ENCODE measurements at regions of chr16 and their contacts with region 1.

Region 1: DNA sequence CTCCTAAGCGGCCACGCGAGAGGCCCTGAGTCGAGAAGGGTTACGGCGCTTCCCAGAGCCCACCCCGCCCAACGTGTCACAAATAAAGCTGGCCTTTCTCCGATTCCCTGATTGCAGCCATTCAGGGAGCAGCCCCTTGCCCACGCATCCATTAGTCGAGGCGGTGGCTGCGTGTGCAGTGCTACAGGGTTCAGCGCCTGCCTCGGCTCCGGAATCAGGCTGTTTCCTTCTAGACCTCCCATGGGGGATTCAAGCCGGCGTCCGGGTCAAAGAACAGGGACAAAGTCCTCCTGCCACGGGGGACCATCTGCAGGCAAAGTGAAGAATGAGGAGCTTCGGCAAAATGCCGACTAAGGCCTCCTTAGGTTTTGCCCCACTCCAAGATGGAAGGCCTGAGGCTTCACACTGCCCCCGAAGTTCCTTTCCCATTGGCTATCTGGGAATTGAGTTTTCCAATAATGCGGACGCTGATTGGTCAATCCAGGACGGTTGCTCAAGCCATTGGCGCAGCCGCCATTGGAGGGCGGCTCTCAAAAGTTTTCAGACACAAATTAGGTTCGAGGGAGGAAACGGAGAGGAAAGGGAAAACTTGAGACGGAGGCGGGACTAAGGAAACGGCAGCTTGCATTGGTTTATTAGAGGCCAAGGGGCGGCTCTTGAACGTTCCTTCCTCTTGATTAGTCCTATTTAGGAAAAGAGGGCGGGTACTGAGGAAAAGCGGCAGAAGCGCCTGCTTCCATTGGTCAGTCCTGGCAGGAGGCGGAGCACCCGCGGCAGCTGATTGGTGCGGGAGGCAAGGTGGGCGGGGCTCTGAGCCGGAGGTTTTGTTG is 430 bp upstream of the KATNB1 start:
- DNase-seq: peak; percentile 94
- ATAC-seq: peak; percentile 93
- H3K4me3 Mint-ChIP-seq: peak overlapping the region; percentile 95
- H3K27ac Mint-ChIP-seq: peak overlapping the region; percentile 98
- H3K4me1 Mint-ChIP-seq: peaks cover 30% of the 10 kb centered on the region
- H3K27me3 Mint-ChIP-seq: no peaks in the 10 kb centered on the region
- CTCF ChIP-seq: no peak

Region 2: DNA sequence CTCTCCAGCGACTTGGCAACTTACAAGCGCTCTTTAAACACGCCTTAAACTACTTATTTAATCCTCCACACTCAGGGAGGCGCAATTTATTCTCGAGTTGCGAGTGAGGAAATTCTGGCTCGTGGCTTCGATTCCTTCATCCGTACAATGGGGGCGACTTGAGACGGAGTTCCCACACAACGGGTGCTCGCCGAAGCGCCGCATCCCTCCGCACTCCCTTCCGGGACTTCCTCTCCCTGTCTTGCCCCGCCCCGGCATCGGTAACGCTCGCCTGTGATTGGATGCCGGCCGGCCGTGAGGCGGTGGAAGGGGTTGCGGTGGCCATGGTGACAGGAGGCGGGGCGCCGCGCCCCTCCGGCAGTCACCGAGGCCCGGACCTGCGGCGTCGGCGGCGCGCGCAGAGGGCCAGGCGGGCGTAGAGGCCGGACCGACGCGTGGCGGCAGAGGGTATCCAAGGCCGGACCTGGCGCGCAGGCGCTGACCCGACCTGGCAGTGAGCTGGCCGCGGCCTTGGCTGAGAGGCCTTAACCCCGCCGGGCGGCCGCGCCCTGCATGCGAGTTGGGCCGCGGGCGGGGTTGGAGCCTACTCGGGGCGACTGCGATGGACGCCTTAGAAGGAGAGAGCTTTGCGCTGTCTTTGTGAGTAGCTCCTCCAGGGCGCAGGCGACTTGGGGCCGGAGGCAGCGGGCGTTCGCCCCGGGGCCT is 490.2 kb before region 1 on chr16 and contains the start of gene ARL2BP:
- CTCF ChIA-PET with region 1: no interaction called
- POLR2A ChIA-PET with region 1: no interaction called
- intact Hi-C with region 1: loop called (anchors 1 kb)
- DNase-seq: peak; percentile 95
- ATAC-seq: peak; percentile 95
- H3K4me3 Mint-ChIP-seq: peak within 1 kb of the TSS; percentile 94
- H3K27ac Mint-ChIP-seq: peak within 1 kb of the TSS; percentile 91
- H3K4me1 Mint-ChIP-seq: peaks cover 40% of the 10 kb centered on the region
- H3K27me3 Mint-ChIP-seq: no peaks in the 10 kb centered on the region
- CTCF ChIP-seq: no peak
- total RNA-seq, gene ARL2BP: 27.1 and 29.4 TPM in 2 replicates

Region 3: GRCh38 chr16:57462209-57462977 is 272.7 kb before region 1 on chr16 and contains the start of gene POLR2C:
- CTCF ChIA-PET with region 1: no interaction called
- POLR2A ChIA-PET with region 1: interaction called, 5 read pairs
- intact Hi-C with region 1: loop called (anchors 1 kb)
- DNase-seq: peak; percentile 93
- ATAC-seq: peak; percentile 97
- H3K4me3 Mint-ChIP-seq: peak within 1 kb of the TSS; percentile 100
- H3K27ac Mint-ChIP-seq: peak within 1 kb of the TSS; percentile 99
- H3K4me1 Mint-ChIP-seq: peaks cover 29% of the 10 kb centered on the region
- H3K27me3 Mint-ChIP-seq: no peaks in the 10 kb centered on the region
- CTCF ChIP-seq: peak; percentile 38
- total RNA-seq, gene POLR2C: 52.2 and 56.6 TPM in 2 replicates

Region 4: DNA sequence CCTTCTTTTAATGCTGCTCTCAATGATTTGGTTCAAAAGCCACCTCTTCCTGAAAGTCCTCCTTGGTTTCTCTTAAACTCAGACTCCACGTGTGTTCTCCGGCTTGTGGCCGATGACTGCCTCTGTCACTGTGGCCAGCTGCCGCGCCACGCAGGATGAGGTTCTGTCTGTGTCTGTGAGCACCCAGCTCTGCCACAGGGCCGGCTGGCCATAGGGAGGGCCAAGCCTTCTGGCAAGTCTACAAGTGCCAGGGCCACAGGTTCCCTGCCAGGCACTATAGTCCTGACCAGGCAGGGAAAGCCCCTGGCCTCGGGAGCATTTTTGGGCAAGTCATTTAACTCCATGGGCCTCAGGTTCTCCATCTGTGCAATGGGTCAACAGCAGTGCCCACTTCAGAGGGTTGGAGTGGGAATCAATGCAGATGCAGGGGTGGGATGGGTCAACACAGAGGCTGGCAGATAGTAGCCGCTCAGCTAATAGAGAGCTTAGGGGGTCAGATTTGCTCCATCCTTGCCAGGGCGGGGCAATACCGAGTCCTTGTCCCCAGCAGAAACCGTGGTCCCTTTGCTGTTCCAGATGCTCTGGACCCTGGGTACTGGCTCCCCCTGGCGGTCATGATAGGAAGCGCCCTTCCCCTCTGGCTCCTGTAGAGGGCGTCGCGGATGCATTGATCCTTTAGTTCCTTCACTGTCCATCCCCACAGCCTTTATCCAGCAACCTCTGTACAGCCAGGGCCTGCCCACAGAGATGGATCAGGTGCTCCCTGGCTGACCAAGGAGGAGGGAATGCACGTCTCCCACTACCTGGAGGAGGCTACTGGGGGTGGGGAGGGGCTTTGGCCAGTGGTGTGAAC is 86.3 kb before region 1 on chr16:
- CTCF ChIA-PET with region 1: no interaction called
- POLR2A ChIA-PET with region 1: no interaction called
- intact Hi-C with region 1: loop called (anchors 5 kb)
- DNase-seq: peak; percentile 67
- ATAC-seq: peak; percentile 87
- H3K4me3 Mint-ChIP-seq: no peak overlapping the region
- H3K27ac Mint-ChIP-seq: no peak overlapping the region
- H3K4me1 Mint-ChIP-seq: peaks cover 25% of the 10 kb centered on the region
- H3K27me3 Mint-ChIP-seq: peaks cover 2% of the 10 kb centered on the region
- CTCF ChIP-seq: peak; percentile 85

Region 5: GRCh38 chr16:57757326-57757786 is 22.2 kb after region 1 on chr16:
- CTCF ChIA-PET with region 1: interaction called, 3 read pairs
- POLR2A ChIA-PET with region 1: interaction called, 4 read pairs
- intact Hi-C with region 1: loop called (anchors 1 kb)
- DNase-seq: peak; percentile 78
- ATAC-seq: peak; percentile 99
- H3K4me3 Mint-ChIP-seq: no peak overlapping the region
- H3K27ac Mint-ChIP-seq: no peak overlapping the region
- H3K4me1 Mint-ChIP-seq: no peaks in the 10 kb centered on the region
- H3K27me3 Mint-ChIP-seq: no peaks in the 10 kb centered on the region
- CTCF ChIP-seq: no peak

Region 6: DNA sequence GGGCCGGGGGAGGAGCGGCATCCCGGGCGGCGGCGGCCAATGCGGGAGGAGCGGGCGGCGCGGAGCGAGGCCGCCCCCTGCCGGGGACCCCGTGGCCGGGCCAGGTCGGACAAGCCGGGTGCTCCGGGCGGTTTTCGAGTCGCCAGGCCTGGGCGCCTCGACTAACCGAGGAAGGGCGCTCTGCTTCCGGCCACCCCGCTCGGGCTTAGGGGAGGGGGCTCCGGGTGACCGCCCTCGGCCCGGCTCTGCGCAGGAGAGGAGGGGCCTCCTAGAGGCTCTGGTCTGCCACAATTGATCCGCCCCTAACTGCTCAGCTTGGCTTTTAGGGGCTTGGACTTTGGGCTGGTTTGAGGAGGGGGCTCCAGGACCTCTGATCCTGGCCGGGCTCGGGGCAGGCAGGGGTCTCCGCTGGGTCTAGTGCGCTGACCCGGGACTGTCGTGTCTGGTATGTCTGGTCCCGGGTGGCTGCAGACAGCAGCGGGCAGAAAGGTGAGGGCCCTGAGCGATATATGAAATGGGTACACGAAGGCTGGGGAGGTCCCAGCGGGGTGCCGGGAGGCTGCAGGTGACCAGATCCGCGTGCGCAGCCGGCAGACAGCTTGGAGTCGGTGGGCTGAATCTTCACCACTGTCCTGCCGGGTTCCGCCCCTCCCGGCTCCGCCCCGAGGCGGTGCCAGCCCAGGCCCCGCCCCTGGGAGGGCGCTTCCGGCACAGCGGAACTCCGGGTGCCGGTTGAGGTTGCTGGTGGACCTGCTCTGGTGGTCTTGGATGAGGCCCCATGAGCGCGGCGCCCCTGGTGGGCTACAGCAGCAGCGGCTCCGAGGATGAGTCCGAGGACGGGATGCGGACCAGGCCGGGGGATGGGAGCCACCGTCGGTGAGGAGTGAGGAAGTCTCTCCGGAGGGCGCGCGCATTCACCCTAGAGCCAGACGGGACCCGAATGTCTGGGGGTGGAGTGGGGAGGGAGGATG is 265.9 kb after region 1 on chr16 and contains the start of gene USB1:
- CTCF ChIA-PET with region 1: no interaction called
- POLR2A ChIA-PET with region 1: interaction called, 12 read pairs
- intact Hi-C with region 1: loop called (anchors 1 kb)
- DNase-seq: peak; percentile 97
- ATAC-seq: peak; percentile 84
- H3K4me3 Mint-ChIP-seq: peak within 1 kb of the TSS; percentile 94
- H3K27ac Mint-ChIP-seq: peak within 1 kb of the TSS; percentile 92
- H3K4me1 Mint-ChIP-seq: peaks cover 42% of the 10 kb centered on the region
- H3K27me3 Mint-ChIP-seq: no peaks in the 10 kb centered on the region
- CTCF ChIP-seq: no peak
- total RNA-seq, gene USB1: 37.4 and 40.7 TPM in 2 replicates